ENCODE measurements at regions of chr12 and their contacts with region 1.

Region 1: DNA sequence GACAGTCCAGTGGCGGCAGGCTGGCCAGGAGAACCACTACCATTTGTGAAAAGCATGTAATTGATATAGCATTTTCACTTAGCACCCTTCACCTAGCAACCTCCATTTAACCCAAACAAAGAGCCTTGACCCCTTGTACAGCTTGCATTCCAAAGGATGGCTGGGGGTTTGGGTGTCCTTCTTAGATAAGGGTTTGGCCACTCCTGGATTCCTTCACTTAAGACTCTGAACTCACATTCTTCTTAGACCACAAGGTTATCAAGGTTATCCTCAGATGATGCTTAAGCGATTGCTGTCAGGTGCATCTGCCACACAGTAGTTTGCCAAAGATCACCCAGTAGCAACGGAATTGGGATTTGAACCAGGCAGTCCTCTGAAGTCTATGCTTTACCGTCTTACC is 102.8 kb downstream of the ZNF664 start:
- DNase-seq: peak; percentile 88 to 91
- H3K4me3 ChIP-seq: no peak overlapping the region
- H3K4me3 Mint-ChIP-seq: peak overlapping the region; percentile 63
- H3K27ac Mint-ChIP-seq: peak overlapping the region; percentile 99
- H3K4me1 ChIP-seq: peaks cover 36% of the 10 kb centered on the region
- H3K4me1 Mint-ChIP-seq: peaks cover 33% of the 10 kb centered on the region
- H3K27me3 ChIP-seq: no peaks in the 10 kb centered on the region
- H3K27me3 Mint-ChIP-seq: no peaks in the 10 kb centered on the region
- CTCF ChIP-seq: no peak

Region 2: GRCh38 chr12:123843912-123844748 is 231.7 kb before region 1 on chr12:
- CTCF ChIA-PET with region 1: no interaction called
- POLR2A ChIA-PET with region 1: no interaction called
- intact Hi-C with region 1: no loop called
- DNase-seq: no peak
- H3K4me3 ChIP-seq: no peak overlapping the region
- H3K4me3 Mint-ChIP-seq: no peak overlapping the region
- H3K27ac Mint-ChIP-seq: no peak overlapping the region
- H3K4me1 ChIP-seq: no peaks in the 10 kb centered on the region
- H3K4me1 Mint-ChIP-seq: no peaks in the 10 kb centered on the region
- H3K27me3 ChIP-seq: no peaks in the 10 kb centered on the region
- H3K27me3 Mint-ChIP-seq: no peaks in the 10 kb centered on the region
- CTCF ChIP-seq: no peak

Region 3: GRCh38 chr12:123966596-123966995 is 109.2 kb before region 1 on chr12:
- CTCF ChIA-PET with region 1: no interaction called
- POLR2A ChIA-PET with region 1: no interaction called
- intact Hi-C with region 1: no loop called
- DNase-seq: no peak
- H3K4me3 ChIP-seq: no peak overlapping the region
- H3K4me3 Mint-ChIP-seq: no peak overlapping the region
- H3K27ac Mint-ChIP-seq: no peak overlapping the region
- H3K4me1 ChIP-seq: no peaks in the 10 kb centered on the region
- H3K4me1 Mint-ChIP-seq: no peaks in the 10 kb centered on the region
- H3K27me3 ChIP-seq: no peaks in the 10 kb centered on the region
- H3K27me3 Mint-ChIP-seq: no peaks in the 10 kb centered on the region
- CTCF ChIP-seq: no peak

Region 4: GRCh38 chr12:124105546-124105945 is 29.7 kb after region 1 on chr12:
- CTCF ChIA-PET with region 1: no interaction called
- POLR2A ChIA-PET with region 1: no interaction called
- intact Hi-C with region 1: no loop called
- DNase-seq: no peak
- H3K4me3 ChIP-seq: no peak overlapping the region
- H3K4me3 Mint-ChIP-seq: no peak overlapping the region
- H3K27ac Mint-ChIP-seq: no peak overlapping the region
- H3K4me1 ChIP-seq: 0 out of 2 replicates have a peak, but pooled peaks cover 2% of the 10 kb centered on the region
- H3K4me1 Mint-ChIP-seq: peaks cover 12% of the 10 kb centered on the region
- H3K27me3 ChIP-seq: no peaks in the 10 kb centered on the region
- H3K27me3 Mint-ChIP-seq: no peaks in the 10 kb centered on the region
- CTCF ChIP-seq: no peak

Region 5: DNA sequence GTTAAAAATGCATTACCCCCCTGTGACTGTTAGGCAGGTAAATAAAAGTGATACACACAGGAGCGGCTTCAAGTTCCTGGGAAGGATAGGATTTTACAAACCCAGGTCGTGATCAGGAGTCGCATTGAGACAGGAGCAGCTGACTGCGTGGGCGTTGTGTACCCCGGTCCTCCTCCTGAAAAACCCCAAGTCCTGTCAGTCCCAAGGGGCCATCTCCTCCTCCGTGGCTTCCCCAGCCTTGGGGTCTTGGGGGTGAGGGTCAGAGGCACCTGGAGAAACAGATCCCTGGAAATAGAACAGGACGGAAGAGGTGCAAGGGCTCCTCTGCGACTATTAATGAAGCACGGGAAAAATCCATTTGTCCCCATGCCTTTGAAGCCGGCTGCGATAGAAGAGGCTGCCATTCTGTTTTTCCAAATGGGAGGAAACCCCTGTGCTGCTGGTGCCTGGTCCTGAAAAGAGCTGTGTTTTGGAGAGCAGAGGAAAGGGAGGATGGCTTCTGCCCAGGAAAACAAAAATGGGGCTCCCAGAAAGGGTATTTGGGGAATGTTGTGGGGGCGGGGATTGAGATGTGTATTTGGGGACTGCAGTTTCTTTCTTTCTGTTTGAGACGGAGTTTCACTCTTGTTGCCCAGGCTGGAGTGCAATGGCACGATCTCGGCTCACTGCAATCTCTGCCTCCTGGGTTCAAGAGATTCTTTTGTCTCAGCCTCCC is 40.3 kb after region 1 on chr12:
- CTCF ChIA-PET with region 1: no interaction called
- POLR2A ChIA-PET with region 1: no interaction called
- intact Hi-C with region 1: no loop called
- DNase-seq: no peak
- H3K4me3 ChIP-seq: no peak overlapping the region
- H3K4me3 Mint-ChIP-seq: no peak overlapping the region
- H3K27ac Mint-ChIP-seq: no peak overlapping the region
- H3K4me1 ChIP-seq: no peaks in the 10 kb centered on the region
- H3K4me1 Mint-ChIP-seq: no peaks in the 10 kb centered on the region
- H3K27me3 ChIP-seq: no peaks in the 10 kb centered on the region
- H3K27me3 Mint-ChIP-seq: no peaks in the 10 kb centered on the region
- CTCF ChIP-seq: no peak

Region 6: GRCh38 chr12:124130717-124131670 is 55.2 kb after region 1 on chr12:
- CTCF ChIA-PET with region 1: interaction called, 12 read pairs
- POLR2A ChIA-PET with region 1: no interaction called
- intact Hi-C with region 1: loop called (anchors 5 kb)
- DNase-seq: peak; percentile 50 to 63
- H3K4me3 ChIP-seq: no peak overlapping the region
- H3K4me3 Mint-ChIP-seq: peak overlapping the region; percentile 11
- H3K27ac Mint-ChIP-seq: peak overlapping the region; percentile 34
- H3K4me1 ChIP-seq: peaks cover 16% of the 10 kb centered on the region
- H3K4me1 Mint-ChIP-seq: peaks cover 19% of the 10 kb centered on the region
- H3K27me3 ChIP-seq: no peaks in the 10 kb centered on the region
- H3K27me3 Mint-ChIP-seq: no peaks in the 10 kb centered on the region
- CTCF ChIP-seq: no peak

Region 7: GRCh38 chr12:124188561-124189405 is 112.9 kb after region 1 on chr12:
- CTCF ChIA-PET with region 1: no interaction called
- POLR2A ChIA-PET with region 1: no interaction called
- intact Hi-C with region 1: loop called (anchors 1 kb)
- DNase-seq: peak; percentile 83 to 88
- H3K4me3 ChIP-seq: no peak overlapping the region
- H3K4me3 Mint-ChIP-seq: peak overlapping the region; percentile 44
- H3K27ac Mint-ChIP-seq: peak overlapping the region; percentile 100
- H3K4me1 ChIP-seq: peaks cover 65% of the 10 kb centered on the region
- H3K4me1 Mint-ChIP-seq: peaks cover 46% of the 10 kb centered on the region
- H3K27me3 ChIP-seq: no peaks in the 10 kb centered on the region
- H3K27me3 Mint-ChIP-seq: no peaks in the 10 kb centered on the region
- CTCF ChIP-seq: no peak

Region 8: GRCh38 chr12:124194893-124195566 is 119.2 kb after region 1 on chr12:
- CTCF ChIA-PET with region 1: no interaction called
- POLR2A ChIA-PET with region 1: no interaction called
- intact Hi-C with region 1: loop called (anchors 1 kb)
- DNase-seq: peak; percentile 59
- H3K4me3 ChIP-seq: no peak overlapping the region
- H3K4me3 Mint-ChIP-seq: peak overlapping the region; percentile 34
- H3K27ac Mint-ChIP-seq: peak overlapping the region; percentile 86
- H3K4me1 ChIP-seq: peaks cover 25% of the 10 kb centered on the region
- H3K4me1 Mint-ChIP-seq: peaks cover 39% of the 10 kb centered on the region
- H3K27me3 ChIP-seq: no peaks in the 10 kb centered on the region
- H3K27me3 Mint-ChIP-seq: no peaks in the 10 kb centered on the region
- CTCF ChIP-seq: no peak